ENCODE measurements at regions of chr3 and their contacts with region 1.

Region 1: DNA sequence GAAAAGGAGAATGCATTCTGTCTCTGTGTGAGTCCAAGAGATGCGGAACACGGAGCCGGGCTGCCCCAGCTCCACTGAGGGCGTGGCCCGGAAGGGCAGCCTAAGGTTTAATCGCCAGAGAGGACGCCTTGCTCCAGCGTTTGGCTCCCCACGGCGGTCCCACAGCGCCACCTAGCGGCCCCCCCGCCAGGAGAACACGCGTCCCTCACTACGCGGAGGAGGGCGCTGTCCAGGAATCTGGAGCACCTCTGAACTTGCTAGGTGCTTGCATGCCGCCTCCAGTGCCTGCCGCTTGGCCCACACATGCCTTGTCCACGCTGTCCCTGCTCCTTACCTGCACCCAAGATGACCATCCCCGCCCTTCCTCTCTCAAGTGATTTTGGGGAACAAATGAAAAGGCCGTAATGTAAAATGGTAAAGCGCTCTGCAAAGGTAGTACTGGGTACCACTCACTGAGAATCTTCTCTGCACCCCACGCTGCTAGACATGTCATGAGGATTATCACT is 14.4 kb upstream of the MRPS22 start:
- DNase-seq: peak; percentile 81 to 88
- H3K4me3 ChIP-seq: no peak overlapping the region
- H3K27ac ChIP-seq: no peak overlapping the region
- H3K4me1 ChIP-seq: no peaks in the 10 kb centered on the region
- H3K27me3 ChIP-seq: no peaks in the 10 kb centered on the region
- CTCF ChIP-seq: peak; percentile 96 to 99 (median 98)
- POLR2A ChIP-seq: no peak

Region 2: DNA sequence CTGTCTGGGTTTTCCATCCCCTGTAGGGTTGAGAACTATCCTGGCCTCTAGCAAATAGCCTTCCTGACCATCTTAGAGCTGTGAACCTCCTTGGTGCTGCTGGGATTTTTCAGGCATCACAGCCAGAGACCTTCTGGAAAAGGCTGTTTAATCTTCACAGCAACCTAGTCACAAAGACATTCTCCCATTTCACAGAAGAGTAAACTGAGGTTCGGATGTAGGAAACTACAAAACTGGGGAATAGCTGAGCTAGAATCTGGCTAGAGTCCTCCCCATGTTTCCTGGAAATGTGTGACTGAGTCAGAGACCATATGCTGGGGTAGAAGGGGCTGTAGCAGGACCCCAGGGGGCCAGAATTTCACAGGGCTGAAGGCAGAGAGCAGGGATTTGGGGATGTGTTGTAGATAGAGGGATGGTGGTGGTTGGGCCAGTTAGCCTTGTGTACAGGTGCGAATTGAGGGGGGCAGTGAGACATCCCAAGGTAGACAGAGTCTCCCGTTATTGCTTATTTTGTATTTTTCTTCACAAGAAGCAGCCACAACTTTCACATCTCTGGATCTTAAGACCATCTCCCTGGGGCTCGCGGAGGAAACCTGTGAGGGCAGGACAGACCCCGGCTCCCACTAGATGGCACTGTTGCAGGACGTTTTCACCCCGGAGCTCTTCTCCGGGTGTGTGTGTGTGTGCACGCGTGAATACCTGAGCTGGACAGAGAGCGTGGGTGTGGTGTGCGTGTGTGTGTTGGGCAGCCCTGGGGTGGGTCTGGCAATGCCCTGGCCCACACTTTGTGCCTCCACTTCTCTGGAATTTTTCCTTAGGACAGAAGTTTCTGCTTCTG is 217.8 kb before region 1 on chr3:
- intact Hi-C with region 1: loop called (anchors 5 kb)
- DNase-seq: peak; percentile 67 to 75
- H3K4me3 ChIP-seq: no peak overlapping the region
- H3K27ac ChIP-seq: no peak overlapping the region
- H3K4me1 ChIP-seq: peaks cover 0 to 3% of the 10 kb centered on the region in 2 donors
- H3K27me3 ChIP-seq: no peaks in the 10 kb centered on the region
- CTCF ChIP-seq: peak in 5 of 6 experiments; percentile 37 to 81 (median 67)
- POLR2A ChIP-seq: no peak

Measured in thyroid gland (tissue), 4 donors.